Esophagus muscularis mucosa (tissue), 4 donors: ENCODE measurements at regions of chr4 and their contacts with region 1.

Region 1: GRCh38 chr4:176789955-176790354 is 2.8 kb downstream of the VEGFC start:
- DNase-seq: no peak
- H3K4me3 ChIP-seq: peak overlapping the region in 1 of 4 donors; percentile 5
- H3K27ac ChIP-seq: no peak overlapping the region
- H3K4me1 ChIP-seq: peaks cover 3 to 30% (median 24%) of the 10 kb centered on the region in 4 donors
- H3K27me3 ChIP-seq: peaks cover 0 to 5% (median 0%) of the 10 kb centered on the region in 4 donors
- CTCF ChIP-seq: peak; percentile 51 to 70 (median 58)
- EP300 ChIP-seq: no peak
- POLR2A ChIP-seq: no peak

Region 2: DNA sequence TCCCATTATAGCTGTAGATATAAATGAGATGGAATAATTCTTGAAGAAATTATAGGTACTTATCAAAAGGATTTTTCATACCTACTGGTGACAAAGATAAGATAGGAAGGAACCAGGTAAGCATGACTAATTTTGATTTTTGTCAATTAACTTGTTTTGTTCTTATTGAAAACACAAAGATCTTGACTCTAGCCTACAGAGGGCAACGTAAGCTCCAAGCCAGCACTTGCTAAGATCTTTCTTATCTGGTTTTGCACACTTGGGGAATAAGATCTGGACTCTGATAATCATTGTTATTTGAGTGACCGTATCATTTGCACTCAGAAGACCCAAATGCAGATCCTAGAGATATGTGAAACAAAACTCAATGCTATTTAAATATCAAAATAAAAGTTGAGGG is 220.7 kb before region 1 on chr4:
- intact Hi-C with region 1: loop called (anchors 5 kb)
- DNase-seq: no peak
- H3K4me3 ChIP-seq: no peak overlapping the region
- H3K27ac ChIP-seq: no peak overlapping the region
- H3K4me1 ChIP-seq: peaks cover 0 to 4% (median 0%) of the 10 kb centered on the region in 4 donors
- H3K27me3 ChIP-seq: no peaks in the 10 kb centered on the region
- CTCF ChIP-seq: no peak
- EP300 ChIP-seq: no peak
- POLR2A ChIP-seq: no peak

Region 3: DNA sequence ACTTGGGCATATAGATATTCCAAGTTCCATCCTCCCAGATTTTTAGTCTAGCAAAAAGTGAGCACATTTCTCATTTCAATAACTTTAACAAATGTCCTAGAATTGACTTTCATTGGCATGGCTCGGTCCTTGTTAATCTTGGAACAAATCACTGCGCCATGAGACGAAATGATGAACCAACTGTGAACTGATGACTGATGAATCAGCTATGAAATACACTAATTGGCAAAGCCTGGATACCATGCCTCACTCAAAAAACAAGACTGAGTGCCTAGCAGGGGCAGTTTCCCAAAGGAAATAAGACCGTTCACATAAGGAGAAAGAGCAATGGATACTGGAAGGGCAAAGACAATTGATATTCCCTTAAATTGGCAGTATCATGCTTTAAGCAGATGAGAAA is 251.4 kb after region 1 on chr4:
- intact Hi-C with region 1: loop called (anchors 5 kb)
- DNase-seq: no peak
- H3K4me3 ChIP-seq: no peak overlapping the region
- H3K27ac ChIP-seq: no peak overlapping the region
- H3K4me1 ChIP-seq: no peaks in the 10 kb centered on the region
- H3K27me3 ChIP-seq: no peaks in the 10 kb centered on the region
- CTCF ChIP-seq: no peak
- EP300 ChIP-seq: no peak
- POLR2A ChIP-seq: no peak